CD4-positive, alpha-beta T cell (primary cell): ENCODE measurements at regions of chr19 and their contacts with region 1.

Region 1: DNA sequence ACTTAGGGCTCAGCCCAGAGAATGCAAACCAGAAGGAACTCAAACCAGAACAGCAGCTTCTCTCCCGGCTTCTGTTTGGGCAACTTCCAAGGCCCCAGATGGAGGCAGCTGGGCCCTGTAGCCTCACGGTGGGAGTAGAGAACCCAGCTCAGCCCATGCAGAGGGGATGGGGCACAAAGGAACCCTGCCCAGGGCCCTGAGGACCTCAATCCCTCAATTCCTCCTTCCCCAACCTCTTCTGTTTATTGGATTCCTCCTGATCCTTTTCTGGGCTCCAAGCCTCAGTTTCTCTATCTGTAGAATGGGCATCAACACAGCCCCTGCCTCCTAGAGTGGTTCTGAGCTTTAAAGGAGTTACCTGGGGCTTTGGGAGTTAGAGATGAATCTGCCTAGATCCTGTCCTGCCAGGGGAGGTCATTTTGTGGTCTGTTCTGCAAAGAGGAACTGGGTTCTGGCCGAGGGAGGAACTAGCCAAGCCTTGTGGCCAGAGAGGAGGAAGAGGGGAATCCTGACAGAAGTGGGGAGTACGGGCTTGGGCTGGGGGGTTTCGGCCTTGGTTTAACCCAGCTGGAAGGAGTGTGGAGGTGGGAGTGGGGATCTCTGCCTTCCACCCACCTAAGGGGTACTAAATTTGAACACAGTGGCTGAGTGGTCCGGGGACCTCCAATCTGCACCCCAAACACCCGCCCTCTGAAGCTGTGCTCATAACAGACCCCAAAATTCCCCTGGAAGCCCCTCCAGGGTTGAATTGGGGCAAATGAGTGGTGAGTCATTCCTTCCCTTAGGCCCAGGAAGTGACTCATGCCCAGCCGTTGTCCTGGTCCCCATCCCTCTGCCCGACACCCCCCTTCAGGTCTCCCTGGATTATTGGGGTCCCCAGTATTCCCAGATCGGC is 2.7 kb downstream of the ADGRE5 start:
- DNase-seq: peak in 5 of 14 experiments; percentile 46 to 84 (median 79)
- ATAC-seq: no peak
- H3K4me3 ChIP-seq: peak overlapping the region; percentile 92
- H3K4me3 Mint-ChIP-seq: peak overlapping the region; percentile 93
- H3K27ac ChIP-seq: peak overlapping the region; percentile 96 to 99
- H3K27ac Mint-ChIP-seq: peak overlapping the region; percentile 94
- H3K4me1 ChIP-seq: peaks cover 81% of the 10 kb centered on the region
- H3K4me1 Mint-ChIP-seq: peaks cover 52% of the 10 kb centered on the region
- H3K27me3 ChIP-seq: no peaks in the 10 kb centered on the region
- H3K27me3 Mint-ChIP-seq: no peaks in the 10 kb centered on the region
- CTCF ChIP-seq: no peak

Region 2: DNA sequence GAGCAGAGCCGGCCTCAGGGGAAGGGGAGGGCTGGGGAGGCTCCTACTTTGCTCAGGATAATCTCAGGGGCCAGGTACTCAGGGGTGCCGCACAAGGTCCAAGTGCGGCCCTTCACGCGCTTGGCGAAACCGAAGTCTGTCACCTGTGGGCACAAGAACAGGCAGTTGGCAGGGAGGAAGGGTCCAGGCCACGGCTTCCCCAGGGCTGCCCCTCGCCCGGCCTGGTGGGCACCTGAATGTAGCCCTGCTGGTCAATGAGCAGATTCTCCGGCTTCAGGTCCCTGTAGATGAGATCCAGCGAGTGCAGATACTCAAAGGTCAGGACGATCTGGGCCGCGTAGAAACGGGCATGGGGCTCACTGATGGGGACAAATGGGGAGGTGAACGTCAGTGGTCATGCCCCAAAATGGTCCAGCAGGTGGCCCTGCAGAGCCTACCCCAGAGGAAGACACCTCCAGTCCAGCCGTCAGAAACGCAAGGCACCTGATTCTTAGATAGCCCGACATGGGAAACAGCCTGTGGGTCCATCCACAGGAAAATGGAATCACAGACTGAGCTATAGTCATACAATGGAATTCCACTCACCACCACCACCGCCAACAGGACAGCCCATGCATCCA is 286.3 kb before region 1 on chr19:
- CTCF ChIA-PET with region 1: no interaction called
- POLR2A ChIA-PET with region 1: no interaction called
- intact Hi-C with region 1: no loop called
- DNase-seq: peak in 1 of 14 experiments; percentile 28
- ATAC-seq: no peak
- H3K4me3 ChIP-seq: no peak overlapping the region
- H3K4me3 Mint-ChIP-seq: no peak overlapping the region
- H3K27ac ChIP-seq: no peak overlapping the region
- H3K27ac Mint-ChIP-seq: no peak overlapping the region
- H3K4me1 ChIP-seq: no peaks in the 10 kb centered on the region
- H3K4me1 Mint-ChIP-seq: peaks cover 11% of the 10 kb centered on the region
- H3K27me3 ChIP-seq: no peaks in the 10 kb centered on the region
- H3K27me3 Mint-ChIP-seq: no peaks in the 10 kb centered on the region
- CTCF ChIP-seq: no peak

Region 3: DNA sequence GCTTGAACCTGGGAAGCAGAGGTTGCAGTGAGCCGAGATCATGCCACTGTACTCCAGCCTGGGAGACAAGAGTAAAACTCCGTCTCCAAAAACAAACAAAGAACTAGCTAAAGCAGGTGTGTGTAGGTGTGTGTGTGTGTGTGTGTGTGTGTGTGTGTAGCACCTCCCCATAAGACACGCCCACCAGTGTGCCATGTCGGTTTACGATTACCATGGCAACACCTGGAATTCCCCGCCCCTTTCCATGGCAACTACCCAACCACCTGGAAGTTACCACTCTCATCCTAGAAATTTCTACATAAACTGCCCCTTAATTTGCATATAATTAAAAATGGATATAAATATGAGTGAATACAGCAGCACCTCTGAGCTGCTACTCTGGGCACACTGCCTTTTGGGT is 83.6 kb before region 1 on chr19:
- CTCF ChIA-PET with region 1: no interaction called
- POLR2A ChIA-PET with region 1: no interaction called
- intact Hi-C with region 1: no loop called
- DNase-seq: no peak
- ATAC-seq: no peak
- H3K4me3 ChIP-seq: no peak overlapping the region
- H3K4me3 Mint-ChIP-seq: no peak overlapping the region
- H3K27ac ChIP-seq: no peak overlapping the region
- H3K27ac Mint-ChIP-seq: no peak overlapping the region
- H3K4me1 ChIP-seq: no peaks in the 10 kb centered on the region
- H3K4me1 Mint-ChIP-seq: no peaks in the 10 kb centered on the region
- H3K27me3 ChIP-seq: peaks cover 0 to 2% of the 10 kb centered on the region in 2 experiments
- H3K27me3 Mint-ChIP-seq: no peaks in the 10 kb centered on the region
- CTCF ChIP-seq: no peak

Region 4: DNA sequence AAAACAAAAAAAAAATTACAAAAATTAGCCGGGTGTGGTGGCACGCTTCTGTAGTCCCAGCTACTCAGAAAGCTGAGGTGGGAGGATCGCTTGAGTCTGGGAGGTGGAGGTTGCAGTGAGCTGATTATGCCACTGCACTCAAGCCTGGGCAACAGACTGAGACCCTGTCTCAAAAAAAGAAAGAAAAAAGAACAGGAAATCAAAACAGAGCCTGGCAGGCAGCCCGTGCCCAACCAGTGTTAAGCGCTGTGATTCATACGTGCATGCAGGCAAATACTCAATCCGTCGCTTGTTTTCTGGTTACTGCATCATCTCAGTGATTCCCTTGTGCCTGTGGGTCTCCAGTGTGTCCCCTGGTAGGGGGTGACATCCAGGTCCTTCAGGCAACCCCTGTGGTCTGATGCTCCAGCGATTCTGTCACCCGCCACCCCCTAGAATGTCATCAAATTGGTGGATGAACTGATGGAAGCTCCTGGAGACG is 17.1 kb after region 1 on chr19:
- CTCF ChIA-PET with region 1: interaction called, 26 read pairs
- POLR2A ChIA-PET with region 1: interaction called, 12 read pairs
- intact Hi-C with region 1: loop called in 1 of 2 experiments (anchors 2 kb)
- DNase-seq: peak in 3 of 14 experiments; percentile 30 to 49 (median 37)
- ATAC-seq: peak; percentile 6
- H3K4me3 ChIP-seq: no peak overlapping the region
- H3K4me3 Mint-ChIP-seq: no peak overlapping the region
- H3K27ac ChIP-seq: peak overlapping the region in 1 of 2 donors; percentile 21
- H3K27ac Mint-ChIP-seq: peak overlapping the region; percentile 75
- H3K4me1 ChIP-seq: peaks cover 29% of the 10 kb centered on the region
- H3K4me1 Mint-ChIP-seq: peaks cover 16% of the 10 kb centered on the region
- H3K27me3 ChIP-seq: no peaks in the 10 kb centered on the region
- H3K27me3 Mint-ChIP-seq: no peaks in the 10 kb centered on the region
- CTCF ChIP-seq: no peak

Region 5: DNA sequence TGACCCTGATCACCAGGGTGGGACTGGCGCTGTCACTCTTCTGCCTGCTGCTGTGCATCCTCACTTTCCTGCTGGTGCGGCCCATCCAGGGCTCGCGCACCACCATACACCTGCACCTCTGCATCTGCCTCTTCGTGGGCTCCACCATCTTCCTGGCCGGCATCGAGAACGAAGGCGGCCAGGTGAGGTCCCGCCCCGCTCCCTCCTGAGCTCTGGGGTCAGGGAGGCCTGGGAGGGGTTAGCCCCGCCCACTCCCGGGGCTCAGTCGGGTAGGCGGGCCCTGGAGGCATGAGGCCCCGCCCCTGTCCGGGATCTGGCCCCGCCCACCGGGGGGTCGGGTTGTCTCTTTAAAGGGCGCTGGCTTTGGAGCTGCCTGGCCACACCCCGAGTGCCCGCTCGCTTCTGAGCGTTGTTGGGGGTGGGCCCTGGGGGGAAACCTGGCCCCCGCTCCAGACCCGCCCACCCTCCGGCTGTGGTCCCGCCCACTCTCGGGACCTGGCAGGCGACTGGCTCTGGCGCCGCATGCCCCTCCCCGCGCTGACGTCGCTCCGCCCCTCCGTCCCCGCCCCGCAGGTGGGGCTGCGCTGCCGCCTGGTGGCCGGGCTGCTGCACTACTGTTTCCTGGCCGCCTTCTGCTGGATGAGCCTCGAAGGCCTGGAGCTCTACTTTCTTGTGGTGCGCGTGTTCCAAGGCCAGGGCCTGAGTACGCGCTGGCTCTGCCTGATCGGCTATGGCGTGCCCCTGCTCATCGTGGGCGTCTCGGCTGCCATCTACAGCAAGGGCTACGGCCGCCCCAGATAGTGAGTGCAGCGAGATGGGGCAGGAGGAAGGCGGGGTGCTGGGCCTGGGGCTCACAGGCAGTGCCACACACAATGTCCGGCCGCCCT is 22.1 kb after region 1 on chr19:
- CTCF ChIA-PET with region 1: interaction called, 26 read pairs
- POLR2A ChIA-PET with region 1: interaction called, 12 read pairs
- intact Hi-C with region 1: loop called in 1 of 2 experiments (anchors 2 kb)
- DNase-seq: peak; percentile 78 to 95 (median 86)
- ATAC-seq: peak; percentile 73
- H3K4me3 ChIP-seq: no peak overlapping the region
- H3K4me3 Mint-ChIP-seq: peak overlapping the region; percentile 69
- H3K27ac ChIP-seq: peak overlapping the region; percentile 22 to 56
- H3K27ac Mint-ChIP-seq: peak overlapping the region; percentile 92
- H3K4me1 ChIP-seq: peaks cover 66% of the 10 kb centered on the region
- H3K4me1 Mint-ChIP-seq: peaks cover 29% of the 10 kb centered on the region
- H3K27me3 ChIP-seq: no peaks in the 10 kb centered on the region
- H3K27me3 Mint-ChIP-seq: no peaks in the 10 kb centered on the region
- CTCF ChIP-seq: peak; percentile 85